Dorsolateral prefrontal cortex (tissue), 120 donors: ENCODE measurements at regions of chr2 and their contacts with region 1.

Region 1: DNA sequence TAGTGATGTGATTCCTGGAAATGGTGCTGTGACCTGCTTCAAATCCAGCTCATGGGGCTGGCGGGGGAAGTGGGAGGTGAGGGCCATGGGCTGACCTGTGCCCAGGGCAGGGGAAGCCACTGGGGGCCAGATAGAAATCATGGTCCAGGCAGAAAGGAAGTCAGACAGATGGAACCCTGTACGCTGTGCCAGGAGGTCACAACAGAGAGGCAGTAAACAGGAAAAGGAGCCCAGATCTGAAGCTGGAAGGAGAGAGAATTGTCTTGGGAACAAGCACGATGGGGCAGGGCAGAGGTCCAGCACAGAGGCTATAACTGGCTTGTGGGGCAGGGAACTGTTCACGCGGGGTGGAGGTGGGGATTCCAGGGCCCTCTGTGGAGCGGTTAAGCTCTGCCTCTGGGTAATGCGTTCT is 76.0 kb downstream of the RNF144A start:
- DNase-seq: peak in 9 of 10 donors; percentile 55 to 85 (median 73)
- H3K4me3 ChIP-seq: peak overlapping the region in 28 of 59 donors; percentile 1 to 44 (median 20)
- H3K27ac ChIP-seq: peak overlapping the region; percentile 77 to 98 (median 93)
- H3K27me3 ChIP-seq: no peaks in the 10 kb centered on the region
- CTCF ChIP-seq: peak in 3 of 56 donors; percentile 8 to 20 (median 16)

Region 2: GRCh38 chr2:6922201-6922685 is 71.0 kb before region 1 on chr2:
- intact Hi-C with region 1: loop called in 1 of 2 experiments (anchors 5 kb)
- DNase-seq: no peak
- H3K4me3 ChIP-seq: peak overlapping the region in 23 of 59 donors; percentile 1 to 93 (median 39)
- H3K27ac ChIP-seq: peak overlapping the region in 52 of 59 donors; percentile 16 to 95 (median 80)
- H3K27me3 ChIP-seq: no peaks in the 10 kb centered on the region
- CTCF ChIP-seq: peak in 9 of 56 donors; percentile 9 to 30 (median 14)

Region 3: DNA sequence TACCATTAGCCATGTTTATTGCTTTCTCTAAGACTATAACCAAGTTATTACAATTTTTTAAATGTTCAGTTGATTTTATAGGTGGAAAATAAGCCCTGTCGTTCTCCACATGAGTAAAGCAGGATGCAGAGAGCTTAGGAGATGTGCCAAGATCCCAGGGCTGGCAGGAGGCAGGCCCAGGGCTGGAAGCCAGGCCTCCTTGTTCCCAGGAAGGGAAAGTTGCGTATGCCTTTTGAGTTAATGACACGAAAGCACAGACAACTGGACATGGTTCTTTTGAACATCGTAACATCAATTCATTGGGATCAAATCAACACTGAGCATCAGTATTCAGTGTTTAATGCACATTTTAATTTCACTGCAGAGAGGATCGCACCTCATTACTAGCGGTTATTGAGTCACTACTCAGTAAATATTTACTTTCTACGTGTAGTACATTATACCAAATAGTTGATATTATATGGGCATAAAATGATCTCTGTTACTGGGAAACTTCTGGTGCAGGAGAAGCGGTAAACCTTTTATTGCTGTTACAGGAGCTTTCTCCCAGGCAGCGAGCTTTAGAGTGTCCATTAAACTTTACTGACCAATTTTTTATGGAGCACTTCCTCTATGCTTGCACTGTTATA is 16.0 kb before region 1 on chr2:
- intact Hi-C with region 1: no loop called
- DNase-seq: peak in 6 of 10 donors; percentile 57 to 92 (median 72)
- H3K4me3 ChIP-seq: peak overlapping the region in 13 of 59 donors; percentile 1 to 46 (median 14)
- H3K27ac ChIP-seq: peak overlapping the region in 49 of 59 donors; percentile 8 to 87 (median 58)
- H3K27me3 ChIP-seq: no peaks in the 10 kb centered on the region
- CTCF ChIP-seq: no peak

Region 4: DNA sequence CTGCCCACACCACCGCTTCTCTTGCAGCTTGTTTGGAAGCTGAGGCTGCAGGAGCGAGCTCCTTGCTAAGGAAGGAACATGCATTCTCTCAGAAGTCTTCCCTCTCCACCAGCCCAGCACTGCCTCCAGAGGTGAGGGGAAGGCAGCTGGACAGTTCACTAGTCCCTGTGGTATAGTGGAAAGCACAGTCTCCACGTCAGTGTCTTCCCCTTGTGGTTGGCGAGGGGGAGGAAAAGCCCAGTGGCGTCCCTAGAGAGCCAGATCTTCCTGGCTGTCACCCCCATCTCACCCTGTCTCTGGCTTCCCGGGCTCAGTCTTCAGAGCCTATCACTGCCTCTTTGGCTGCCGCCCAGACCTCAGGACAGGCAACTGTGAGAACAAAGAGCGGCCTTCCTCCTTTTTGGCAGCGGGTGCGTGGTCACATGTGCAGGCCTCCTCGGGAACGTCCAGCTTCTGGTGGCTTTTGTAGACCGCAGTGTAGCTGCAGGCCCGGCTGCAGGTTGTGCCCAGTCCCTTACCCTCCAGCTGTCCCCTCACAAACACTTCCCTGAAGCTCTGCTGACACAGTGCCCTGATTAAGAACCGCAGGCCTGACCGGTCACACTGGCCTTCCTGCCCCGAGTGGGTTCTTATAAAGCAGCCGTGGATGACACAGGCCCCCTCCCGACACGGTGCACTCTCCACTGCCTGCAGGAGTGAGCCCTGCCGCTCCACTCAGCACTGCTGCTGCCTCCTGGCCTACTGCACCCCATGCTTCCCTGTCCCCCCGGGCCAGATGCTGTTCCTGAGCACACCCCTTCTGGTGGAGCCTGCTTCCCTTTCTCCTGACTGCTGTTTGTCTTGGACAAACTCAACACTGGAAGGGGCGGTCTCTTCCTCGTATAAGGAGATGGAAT is 14.9 kb after region 1 on chr2:
- intact Hi-C with region 1: loop called in 1 of 2 experiments (anchors 1 kb)
- DNase-seq: peak; percentile 83 to 95 (median 92)
- H3K4me3 ChIP-seq: peak overlapping the region in 34 of 59 donors; percentile 3 to 43 (median 18)
- H3K27ac ChIP-seq: peak overlapping the region; percentile 67 to 98 (median 94)
- H3K27me3 ChIP-seq: no peaks in the 10 kb centered on the region
- CTCF ChIP-seq: peak in 50 of 56 donors; percentile 3 to 53 (median 36)

Region 5: DNA sequence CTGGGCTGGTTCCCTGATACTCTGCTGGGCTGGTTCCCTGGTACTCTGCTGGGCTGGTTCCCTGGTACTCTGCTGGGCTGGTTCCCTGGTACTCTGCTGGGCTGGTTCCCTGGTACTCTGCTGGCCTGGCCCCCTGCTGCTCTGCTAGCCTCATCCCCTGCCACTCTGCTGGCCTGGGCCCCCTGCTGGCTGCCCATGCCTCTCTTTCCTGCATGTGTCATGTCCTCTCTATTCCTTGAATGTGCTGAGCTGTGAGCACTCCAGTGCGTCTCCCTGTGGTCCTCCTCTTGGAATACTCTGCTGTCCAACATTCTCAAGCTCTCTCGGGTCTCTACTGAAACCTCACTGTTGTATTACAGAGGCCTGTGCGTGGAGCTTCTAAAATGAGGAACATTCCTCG is 140.3 kb after region 1 on chr2:
- intact Hi-C with region 1: no loop called
- DNase-seq: no peak
- H3K4me3 ChIP-seq: no peak overlapping the region
- H3K27ac ChIP-seq: no peak overlapping the region
- H3K27me3 ChIP-seq: no peaks in the 10 kb centered on the region
- CTCF ChIP-seq: no peak

Region 6: GRCh38 chr2:7417845-7418742 is 424.9 kb after region 1 on chr2:
- intact Hi-C with region 1: no loop called
- DNase-seq: no peak
- H3K4me3 ChIP-seq: no peak overlapping the region
- H3K27ac ChIP-seq: no peak overlapping the region
- H3K27me3 ChIP-seq: peaks cover 0 to 24% (median 0%) of the 10 kb centered on the region in 45 donors
- CTCF ChIP-seq: no peak